Motor neuron (in vitro differentiated cells): ENCODE measurements at regions of chr11 and their contacts with region 1.

Region 1: DNA sequence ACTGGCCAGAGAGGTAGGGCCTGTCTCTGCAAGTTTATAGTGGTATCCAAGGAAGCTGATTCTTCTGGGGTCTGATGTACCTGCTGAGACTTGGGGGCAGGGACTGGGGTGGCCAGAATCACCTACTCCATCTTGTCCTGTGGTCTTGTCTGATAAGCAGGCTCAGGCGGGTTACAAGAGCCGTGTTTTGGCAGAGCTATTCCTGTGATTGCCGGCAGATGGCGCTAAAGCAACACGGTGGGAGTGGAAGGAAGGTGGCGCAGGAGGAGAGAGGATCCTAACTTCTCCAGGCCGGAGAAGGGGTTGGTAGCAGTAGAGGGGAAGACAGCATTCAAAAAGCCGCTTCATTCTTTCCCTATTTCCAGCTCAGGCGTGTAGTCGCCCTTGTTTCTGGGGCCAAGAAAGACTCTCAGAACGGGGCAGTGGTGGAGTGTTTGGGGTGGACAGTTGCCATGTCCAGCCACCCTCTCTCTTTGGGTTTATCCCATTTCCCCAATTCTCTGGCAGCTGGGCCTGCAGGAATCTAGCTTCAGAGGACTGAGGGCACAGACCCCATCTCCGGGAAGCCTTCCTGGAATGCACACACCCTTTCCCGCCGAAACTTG is 15.1 kb downstream of the CHRM1 start:
- ATAC-seq: peak; percentile 54 to 95 (median 90)
- H3K4me3 ChIP-seq: no peak overlapping the region
- H3K27ac ChIP-seq: no peak overlapping the region
- H3K4me1 ChIP-seq: no peaks in the 10 kb centered on the region

Region 2: GRCh38 chr11:63023841-63024648 is 118.0 kb after region 1 on chr11:
- in situ Hi-C with region 1: loop called in 8 of 9 experiments (anchors 5 to 10 kb)
- ATAC-seq: peak; percentile 88 to 98 (median 96)
- H3K4me3 ChIP-seq: no peak overlapping the region
- H3K27ac ChIP-seq: no peak overlapping the region
- H3K4me1 ChIP-seq: peaks cover 0 to 4% of the 10 kb centered on the region in 2 donors

Region 3: DNA sequence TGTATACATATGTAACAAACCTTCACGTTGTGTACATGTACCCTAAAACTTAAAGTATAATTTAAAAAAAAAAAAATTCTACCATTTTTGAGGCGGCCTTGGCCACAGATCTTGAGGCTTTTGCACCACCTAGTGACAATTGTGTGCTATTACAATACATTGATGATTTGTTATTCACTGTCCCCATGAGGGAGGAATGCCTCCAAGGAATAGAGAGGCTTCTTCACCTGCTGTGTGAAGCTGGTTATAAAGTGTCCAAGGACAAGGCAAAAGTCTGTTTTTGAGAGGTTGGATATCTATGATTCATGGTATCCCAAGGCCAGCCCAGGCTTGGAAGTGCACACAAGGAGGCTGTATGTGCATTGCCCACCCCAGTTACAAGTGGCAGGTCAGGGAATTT is 306.7 kb after region 1 on chr11:
- in situ Hi-C with region 1: loop called in 3 of 9 experiments (anchors 25 kb)
- ATAC-seq: peak in 1 of 8 experiments; percentile 16
- H3K4me3 ChIP-seq: no peak overlapping the region
- H3K27ac ChIP-seq: no peak overlapping the region
- H3K4me1 ChIP-seq: no peaks in the 10 kb centered on the region

Region 4: GRCh38 chr11:63635762-63636465 is 729.9 kb after region 1 on chr11:
- in situ Hi-C with region 1: loop called in 1 of 9 experiments (anchors 25 kb)
- ATAC-seq: peak; percentile 71 to 89 (median 76)
- H3K4me3 ChIP-seq: no peak overlapping the region
- H3K27ac ChIP-seq: no peak overlapping the region
- H3K4me1 ChIP-seq: no peaks in the 10 kb centered on the region

Region 5: DNA sequence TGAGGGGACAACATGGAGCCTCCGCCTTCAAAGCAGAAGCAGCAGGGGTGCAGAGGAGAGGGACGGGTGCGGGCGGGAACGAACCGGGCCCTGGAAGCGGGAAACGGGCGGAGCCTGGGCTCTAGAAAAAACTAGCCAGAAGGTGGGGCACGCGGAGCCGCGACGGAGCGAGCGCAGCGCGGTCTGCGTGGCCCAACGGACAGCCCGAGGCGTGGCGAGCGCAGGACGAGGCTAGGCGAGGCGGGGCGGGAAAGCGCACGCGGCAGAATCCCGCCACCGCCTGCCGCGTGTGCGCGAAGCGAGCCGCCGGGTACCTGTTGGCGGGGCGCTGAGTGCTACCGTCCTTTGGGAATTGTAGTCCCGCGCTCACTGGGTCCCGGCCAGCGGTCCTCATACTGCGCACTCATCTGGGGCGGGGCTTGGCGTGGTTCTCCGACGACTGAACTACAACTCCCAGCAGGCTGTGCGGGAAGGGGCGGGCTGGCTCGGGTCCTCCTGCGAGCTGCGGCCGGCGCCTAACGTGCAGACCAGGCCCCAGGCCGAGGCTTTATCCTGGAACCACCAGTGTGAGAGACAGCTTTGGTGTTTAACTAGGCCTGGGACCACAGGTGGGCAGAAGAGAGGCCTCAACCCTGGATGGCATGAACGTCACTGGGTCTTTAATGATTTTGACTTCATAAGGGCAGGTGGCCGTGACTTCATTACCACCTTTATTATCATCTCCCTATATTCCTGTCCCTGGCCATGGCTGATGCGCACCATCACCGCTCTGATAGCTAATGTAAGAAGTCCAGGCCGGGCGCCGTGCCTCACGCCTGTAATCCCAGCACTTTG is 765.5 kb after region 1 on chr11 and contains the start of gene ATL3:
- in situ Hi-C with region 1: loop called in 1 of 9 experiments (anchors 25 kb)
- ATAC-seq: peak; percentile 72 to 95 (median 93)
- H3K4me3 ChIP-seq: peak within 1 kb of the TSS; percentile 44 to 80 (median 54)
- H3K27ac ChIP-seq: peak within 1 kb of the TSS; percentile 60 to 84
- H3K4me1 ChIP-seq: peaks cover 4 to 13% of the 10 kb centered on the region in 2 donors
- total RNA-seq, gene ATL3: 5.1 to 56.4 (median 11.6) TPM